CD4-positive, alpha-beta T cell (primary cell): ENCODE measurements at regions of chr12 and their contacts with region 1.

Region 1: GRCh38 chr12:4148418-4149056 is 125.0 kb upstream of the CCND2 start:
- DNase-seq: peak in 11 of 14 experiments; percentile 16 to 82 (median 43)
- ATAC-seq: peak; percentile 56
- H3K4me3 ChIP-seq: no peak overlapping the region
- H3K4me3 Mint-ChIP-seq: no peak overlapping the region
- H3K27ac ChIP-seq: no peak overlapping the region
- H3K27ac Mint-ChIP-seq: no peak overlapping the region
- H3K4me1 ChIP-seq: peaks cover 51% of the 10 kb centered on the region
- H3K4me1 Mint-ChIP-seq: peaks cover 47% of the 10 kb centered on the region
- H3K27me3 ChIP-seq: no peaks in the 10 kb centered on the region
- H3K27me3 Mint-ChIP-seq: no peaks in the 10 kb centered on the region
- CTCF ChIP-seq: no peak

Region 2: DNA sequence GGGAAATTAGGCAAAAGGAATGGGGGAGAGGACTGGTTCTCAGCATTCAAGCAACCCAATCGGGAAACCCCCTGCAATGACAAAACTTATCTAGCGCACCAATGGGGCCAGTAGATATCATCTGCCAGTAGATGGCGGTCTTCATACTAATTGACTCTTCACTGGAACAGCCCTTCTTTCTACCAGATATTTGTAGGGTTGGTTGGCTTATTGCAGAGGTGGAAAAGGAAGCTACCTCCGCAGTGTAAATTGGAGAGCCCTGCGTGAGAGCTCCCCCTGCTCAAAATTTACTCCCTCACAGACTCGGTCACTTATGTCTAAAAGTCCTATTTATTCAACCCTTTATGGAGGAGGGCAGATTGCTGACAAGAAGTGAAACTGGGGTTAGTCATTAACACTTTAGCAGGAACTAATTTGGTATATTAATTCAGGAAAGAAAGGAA is 41.1 kb before region 1 on chr12:
- CTCF ChIA-PET with region 1: interaction called, 3 read pairs
- POLR2A ChIA-PET with region 1: interaction called, 7 read pairs
- intact Hi-C with region 1: loop called (anchors 5 kb)
- DNase-seq: peak; percentile 30 to 92 (median 54)
- ATAC-seq: peak; percentile 99
- H3K4me3 ChIP-seq: no peak overlapping the region
- H3K4me3 Mint-ChIP-seq: no peak overlapping the region
- H3K27ac ChIP-seq: no peak overlapping the region
- H3K27ac Mint-ChIP-seq: peak overlapping the region; percentile 71
- H3K4me1 ChIP-seq: peaks cover 10% of the 10 kb centered on the region
- H3K4me1 Mint-ChIP-seq: peaks cover 12% of the 10 kb centered on the region
- H3K27me3 ChIP-seq: no peaks in the 10 kb centered on the region
- H3K27me3 Mint-ChIP-seq: no peaks in the 10 kb centered on the region
- CTCF ChIP-seq: peak; percentile 81

Region 3: GRCh38 chr12:4164559-4165558 is 16.3 kb after region 1 on chr12:
- CTCF ChIA-PET with region 1: interaction called, 4 read pairs
- POLR2A ChIA-PET with region 1: interaction called, 17 read pairs
- intact Hi-C with region 1: no loop called
- DNase-seq: peak in 13 of 14 experiments; percentile 33 to 75 (median 45)
- ATAC-seq: peak; percentile 96
- H3K4me3 ChIP-seq: peak overlapping the region; percentile 66
- H3K4me3 Mint-ChIP-seq: peak overlapping the region; percentile 92
- H3K27ac ChIP-seq: peak overlapping the region in 1 of 2 donors; percentile 18
- H3K27ac Mint-ChIP-seq: peak overlapping the region; percentile 83
- H3K4me1 ChIP-seq: peaks cover 14% of the 10 kb centered on the region
- H3K4me1 Mint-ChIP-seq: peaks cover 19% of the 10 kb centered on the region
- H3K27me3 ChIP-seq: no peaks in the 10 kb centered on the region
- H3K27me3 Mint-ChIP-seq: no peaks in the 10 kb centered on the region
- CTCF ChIP-seq: no peak